Heart left ventricle (tissue), 16 donors: ENCODE measurements at regions of chr3 and their contacts with region 1.

Region 1: GRCh38 chr3:51759203-51759602 is 19.8 kb downstream of the IQCF6 start:
- DNase-seq: no peak
- ATAC-seq: no peak
- H3K4me3 ChIP-seq: no peak overlapping the region
- H3K27ac ChIP-seq: no peak overlapping the region
- H3K4me1 ChIP-seq: no peaks in the 10 kb centered on the region
- H3K27me3 ChIP-seq: peaks cover 0 to 7% (median 0%) of the 10 kb centered on the region in 9 donors
- CTCF ChIP-seq: no peak
- POLR2A ChIP-seq: no peak

Region 2: GRCh38 chr3:51581529-51581928 is 177.7 kb before region 1 on chr3:
- intact Hi-C with region 1: no loop called
- DNase-seq: no peak
- ATAC-seq: no peak
- H3K4me3 ChIP-seq: no peak overlapping the region
- H3K27ac ChIP-seq: no peak overlapping the region
- H3K4me1 ChIP-seq: peaks cover 0 to 4% (median 0%) of the 10 kb centered on the region in 12 donors
- H3K27me3 ChIP-seq: no peaks in the 10 kb centered on the region
- CTCF ChIP-seq: no peak
- POLR2A ChIP-seq: no peak

Region 3: DNA sequence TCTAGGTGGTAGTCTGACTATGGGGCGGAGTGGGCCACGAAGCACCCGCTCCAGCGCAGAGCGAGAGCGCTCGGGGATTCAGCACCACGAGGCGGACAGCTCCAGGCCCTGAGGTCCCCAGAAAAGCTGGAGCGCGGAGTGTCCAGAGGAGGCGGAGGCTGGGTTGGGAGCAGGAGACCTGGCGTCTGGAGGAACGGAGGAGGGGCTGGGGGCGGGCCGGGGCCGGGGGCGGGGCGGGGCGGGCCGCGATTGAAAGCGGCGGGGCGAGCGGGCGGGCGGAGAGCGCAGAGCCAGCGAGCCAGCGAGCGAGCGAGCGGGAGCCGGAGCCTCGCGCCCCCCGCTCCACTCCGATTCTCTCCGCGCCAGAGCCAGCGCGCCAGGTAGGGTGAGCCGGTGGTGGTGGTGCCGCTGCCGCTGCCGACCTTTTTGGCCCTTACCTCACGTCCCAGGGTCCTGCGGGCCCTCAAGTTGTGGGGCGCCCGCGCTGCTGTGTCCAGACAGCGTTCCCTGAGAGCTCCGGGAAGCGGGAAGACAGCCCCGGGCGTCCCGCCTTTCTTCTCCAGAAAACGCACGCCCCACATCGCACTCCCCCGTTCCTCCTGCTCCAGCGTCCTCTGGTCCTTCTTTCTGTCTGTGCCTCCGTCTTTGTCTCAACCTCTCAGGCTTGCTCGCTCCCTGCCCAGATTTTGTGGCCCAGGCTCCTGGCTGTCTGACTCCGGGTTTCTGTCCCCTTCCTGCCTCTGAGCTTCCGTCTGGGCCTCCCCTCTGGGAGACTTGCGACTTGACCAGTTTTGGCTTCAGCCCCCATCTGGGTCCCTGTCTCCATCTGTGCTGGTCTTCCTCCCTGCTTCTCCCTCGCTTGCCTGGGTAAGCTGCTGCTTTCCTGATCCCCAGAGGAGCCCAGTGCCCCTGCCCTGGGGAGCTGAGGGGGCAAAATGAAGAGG is 52.1 kb before region 1 on chr3 and contains the start of gene GRM2:
- intact Hi-C with region 1: loop called in 1 of 10 experiments (anchors 2 kb)
- DNase-seq: peak; percentile 79 to 88 (median 83)
- ATAC-seq: peak; percentile 83 to 93 (median 88)
- H3K4me3 ChIP-seq: peak within 1 kb of the TSS in 10 of 12 donors; percentile 22 to 53 (median 39)
- H3K27ac ChIP-seq: no peak within 1 kb of the TSS
- H3K4me1 ChIP-seq: peaks cover 0 to 17% (median 2%) of the 10 kb centered on the region in 12 donors
- H3K27me3 ChIP-seq: no peaks in the 10 kb centered on the region
- CTCF ChIP-seq: peak in 3 of 12 donors; percentile 14 to 35 (median 27)
- POLR2A ChIP-seq: no peak
- total RNA-seq, gene GRM2: 0.21 to 0.95 (median 0.56) TPM in 7 of 9 donors, not detected in the others